ENCODE measurements at regions of chr19 and their contacts with region 1.

Region 1: GRCh38 chr19:16185123-16185767 is at the start of gene FAM32A:
- DNase-seq: peak; percentile 99
- ATAC-seq: peak; percentile 98
- total RNA-seq, gene FAM32A: 41.3 to 44.1 TPM

Region 2: GRCh38 chr19:15584541-15585115 is 600.6 kb before region 1 on chr19:
- intact Hi-C with region 1: loop called in 1 of 2 experiments (anchors 5 kb)
- DNase-seq: peak; percentile 80
- ATAC-seq: peak; percentile 72 to 77

Region 3: GRCh38 chr19:15629003-15629880 is 556.0 kb before region 1 on chr19:
- intact Hi-C with region 1: loop called in 1 of 2 experiments (anchors 2 kb)
- DNase-seq: peak; percentile 82
- ATAC-seq: peak; percentile 90 to 91

Region 4: DNA sequence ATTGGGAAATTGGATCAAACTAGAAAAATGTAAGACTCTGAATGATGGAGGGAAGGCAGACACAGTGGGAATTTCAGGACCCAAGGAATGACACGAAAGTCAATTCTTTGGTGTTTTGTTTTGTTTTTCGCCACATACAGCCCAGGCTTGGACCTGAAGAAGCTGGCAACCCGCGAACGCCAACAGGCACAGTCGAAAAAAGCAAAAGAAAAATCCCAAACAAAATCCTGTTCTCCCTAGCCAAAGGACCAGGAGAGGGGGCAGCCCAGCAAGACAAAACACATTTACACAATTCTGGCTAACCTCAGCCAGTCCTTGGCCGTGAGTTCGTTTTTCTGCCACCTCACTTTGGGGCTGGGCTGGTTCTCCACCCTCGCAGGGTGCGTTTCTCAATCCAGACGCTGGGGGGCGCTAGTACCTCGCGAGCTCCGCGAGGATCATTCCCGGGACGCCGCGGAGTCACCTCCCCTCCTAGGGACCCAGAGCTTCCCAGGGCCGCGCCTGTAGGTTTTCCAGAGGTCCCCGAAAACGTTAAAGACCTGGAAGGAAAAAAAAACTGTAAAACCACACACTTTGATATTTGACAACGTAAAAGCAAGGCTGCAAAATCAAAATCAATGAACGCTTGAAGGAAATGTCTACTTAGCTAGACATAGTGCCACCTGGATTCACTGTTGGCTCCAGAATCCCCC is 143.8 kb before region 1 on chr19:
- intact Hi-C with region 1: loop called (anchors 5 kb)
- DNase-seq: peak; percentile 86
- ATAC-seq: peak; percentile 92 to 94

Region 5: DNA sequence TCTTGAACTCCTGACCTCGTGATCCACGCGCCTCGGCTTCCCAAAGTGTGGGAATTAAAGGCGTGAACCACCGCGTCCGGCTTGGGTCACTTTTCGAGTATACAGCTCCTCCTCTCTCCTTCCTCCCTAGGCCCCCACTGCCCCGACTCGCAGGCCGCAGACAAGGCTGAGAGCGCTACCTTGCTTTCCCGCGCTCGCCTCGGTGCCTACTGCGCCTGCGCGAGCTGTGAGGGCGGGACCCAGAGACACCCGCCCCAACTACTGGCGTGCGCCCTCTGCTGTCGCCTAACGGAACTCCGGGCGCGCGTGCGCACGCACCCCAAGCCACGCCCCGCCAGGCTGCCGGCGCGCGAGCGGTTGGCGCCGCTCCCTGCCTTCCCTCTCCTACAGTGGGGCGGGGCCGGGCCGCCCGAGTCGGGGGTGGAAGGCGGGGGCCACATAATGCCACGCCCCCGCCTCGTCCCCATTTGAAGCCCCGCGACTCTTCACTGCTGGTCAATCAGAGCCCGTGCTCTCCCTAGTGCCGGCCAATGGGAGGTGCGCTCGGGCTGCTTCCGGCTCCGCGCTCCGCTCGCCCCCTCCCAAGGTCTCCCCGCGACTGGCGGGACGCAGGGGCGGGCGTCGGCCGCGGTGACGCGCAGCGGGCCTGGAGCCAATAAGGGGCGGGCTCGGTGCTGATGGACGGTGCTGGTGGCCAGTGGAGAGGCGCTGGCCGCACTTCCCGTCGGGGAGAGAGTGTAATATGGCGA is 73.9 kb before region 1 on chr19 and contains the start of gene RAB8A:
- intact Hi-C with region 1: loop called in 1 of 2 experiments (anchors 10 kb)
- DNase-seq: peak; percentile 99
- ATAC-seq: peak; percentile 97 to 98
- total RNA-seq, gene RAB8A: 28.2 to 29.8 TPM

Region 6: GRCh38 chr19:16233836-16234551 is 48.7 kb after region 1 on chr19:
- intact Hi-C with region 1: no loop called
- DNase-seq: no peak
- ATAC-seq: peak in 1 of 2 donors; percentile 5

Measured in left cardiac atrium (tissue), 4 donors.